ENCODE measurements at regions of chr9 and their contacts with region 1.

Region 1: GRCh38 chr9:124285903-124286291 is 28.1 kb downstream of the NEK6 start:
- DNase-seq: peak; percentile 79
- H3K4me3 Mint-ChIP-seq: peak overlapping the region; percentile 70
- H3K27ac Mint-ChIP-seq: peak overlapping the region; percentile 99
- H3K4me1 Mint-ChIP-seq: peaks cover 34% of the 10 kb centered on the region
- H3K27me3 Mint-ChIP-seq: no peaks in the 10 kb centered on the region

Region 2: DNA sequence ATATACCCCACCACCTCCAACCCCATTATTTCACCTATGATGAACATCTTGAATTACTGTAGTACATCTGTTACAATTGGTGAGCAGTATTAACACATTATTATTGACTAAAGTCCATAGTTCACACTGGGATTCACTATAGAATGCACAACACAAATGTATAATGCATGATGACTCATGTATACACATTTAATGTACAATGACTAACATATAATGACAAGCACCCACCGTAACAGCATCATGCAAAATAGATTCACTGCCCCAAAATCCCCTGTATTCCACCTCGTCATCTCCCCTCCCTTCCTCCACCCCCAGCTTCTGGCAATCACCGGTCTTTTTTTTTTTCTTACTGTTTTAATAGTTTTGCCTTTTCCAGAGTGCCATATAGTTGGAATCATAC is 75.2 kb before region 1 on chr9:
- CTCF ChIA-PET with region 1: no interaction called
- POLR2A ChIA-PET with region 1: interaction called, 3 read pairs
- intact Hi-C with region 1: loop called (anchors 1 kb)
- DNase-seq: peak; percentile 77
- H3K4me3 Mint-ChIP-seq: no peak overlapping the region
- H3K27ac Mint-ChIP-seq: no peak overlapping the region
- H3K4me1 Mint-ChIP-seq: peaks cover 71% of the 10 kb centered on the region
- H3K27me3 Mint-ChIP-seq: peaks cover 2% of the 10 kb centered on the region

Region 3: GRCh38 chr9:124228516-124228915 is 57.4 kb before region 1 on chr9:
- CTCF ChIA-PET with region 1: no interaction called
- POLR2A ChIA-PET with region 1: no interaction called
- intact Hi-C with region 1: no loop called
- DNase-seq: no peak
- H3K4me3 Mint-ChIP-seq: no peak overlapping the region
- H3K27ac Mint-ChIP-seq: no peak overlapping the region
- H3K4me1 Mint-ChIP-seq: no peaks in the 10 kb centered on the region
- H3K27me3 Mint-ChIP-seq: peaks cover 1% of the 10 kb centered on the region

Region 4: GRCh38 chr9:124297553-124297905 is 11.6 kb after region 1 on chr9:
- CTCF ChIA-PET with region 1: no interaction called
- POLR2A ChIA-PET with region 1: no interaction called
- intact Hi-C with region 1: no loop called
- DNase-seq: no peak
- H3K4me3 Mint-ChIP-seq: no peak overlapping the region
- H3K27ac Mint-ChIP-seq: no peak overlapping the region
- H3K4me1 Mint-ChIP-seq: peaks cover 10% of the 10 kb centered on the region
- H3K27me3 Mint-ChIP-seq: no peaks in the 10 kb centered on the region

Measured in activated CD4-positive, alpha-beta memory T cell treated with anti-CD3 and anti-CD28 coated beads for 36 hours (primary cell).